PC-9 (cell line): ENCODE measurements at regions of chr6 and their contacts with region 1.

Region 1: DNA sequence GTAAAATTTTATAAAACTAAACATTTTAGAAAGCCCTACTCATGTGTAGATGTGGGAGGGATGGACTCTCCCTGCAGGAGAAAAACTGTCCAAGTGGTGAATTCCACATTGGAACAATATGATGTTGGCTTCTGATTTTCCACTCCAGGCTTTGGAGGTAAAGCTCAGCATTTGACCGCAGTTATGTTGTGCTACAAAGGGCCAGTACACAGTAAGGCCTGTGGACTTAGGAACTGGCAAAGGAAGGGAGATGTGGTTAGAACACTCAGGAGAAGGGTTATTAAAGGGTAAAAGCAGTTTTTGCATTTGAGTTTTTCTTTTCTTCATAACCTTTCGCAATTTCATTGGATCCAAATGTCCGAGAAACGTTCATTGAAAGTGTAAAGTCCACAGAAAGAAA is 150.3 kb upstream of the SASH1 start:
- DNase-seq: peak in 1 of 2 experiments; percentile 68
- H3K4me3 ChIP-seq: peak overlapping the region; percentile 47; the same call in 1 of the 2 replicates
- H3K27ac ChIP-seq: peak overlapping the region; percentile 99
- H3K4me1 ChIP-seq: peaks cover 53% of the 10 kb centered on the region
- H3K27me3 ChIP-seq: no peaks in the 10 kb centered on the region
- CTCF ChIP-seq: no peak

Region 2: GRCh38 chr6:148244217-148244935 is 52.1 kb after region 1 on chr6:
- CTCF ChIA-PET with region 1: interaction called, 10 read pairs
- POLR2A ChIA-PET with region 1: interaction called, 3 read pairs
- intact Hi-C with region 1: no loop called
- DNase-seq: no peak
- H3K4me3 ChIP-seq: no peak overlapping the region
- H3K27ac ChIP-seq: no peak overlapping the region
- H3K4me1 ChIP-seq: no peaks in the 10 kb centered on the region
- H3K27me3 ChIP-seq: no peaks in the 10 kb centered on the region
- CTCF ChIP-seq: no peak

Region 3: DNA sequence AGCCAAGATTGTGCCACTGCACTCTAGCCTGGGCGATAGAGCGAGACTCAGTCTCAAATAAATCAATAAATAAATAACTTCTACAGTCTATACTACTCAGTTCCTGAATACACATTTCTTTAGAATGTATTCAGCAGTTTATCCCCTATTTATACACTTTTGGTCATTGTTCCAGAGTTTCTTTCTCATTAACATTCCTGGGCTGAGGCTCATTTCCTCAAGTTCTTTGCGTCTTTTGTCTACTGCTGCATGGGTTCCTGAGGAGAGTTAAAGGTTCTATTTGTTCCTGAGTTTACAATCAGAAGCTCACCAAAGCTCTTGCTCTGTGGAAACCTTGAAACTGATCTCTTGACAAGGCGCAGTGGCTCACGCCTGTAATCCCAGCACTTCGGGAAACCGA is 112.7 kb after region 1 on chr6:
- CTCF ChIA-PET with region 1: no interaction called
- POLR2A ChIA-PET with region 1: no interaction called
- intact Hi-C with region 1: loop called (anchors 2 kb)
- DNase-seq: no peak
- H3K4me3 ChIP-seq: no peak overlapping the region
- H3K27ac ChIP-seq: no peak overlapping the region
- H3K4me1 ChIP-seq: peaks cover 34% of the 10 kb centered on the region
- H3K27me3 ChIP-seq: no peaks in the 10 kb centered on the region
- CTCF ChIP-seq: no peak

Region 4: GRCh38 chr6:148407372-148407771 is 215.1 kb after region 1 on chr6:
- CTCF ChIA-PET with region 1: no interaction called
- POLR2A ChIA-PET with region 1: no interaction called
- intact Hi-C with region 1: loop called (anchors 1 kb)
- DNase-seq: peak; percentile 9 to 86
- H3K4me3 ChIP-seq: no peak overlapping the region
- H3K27ac ChIP-seq: peak overlapping the region; percentile 47
- H3K4me1 ChIP-seq: peaks cover 45% of the 10 kb centered on the region
- H3K27me3 ChIP-seq: no peaks in the 10 kb centered on the region
- CTCF ChIP-seq: no peak

Region 5: GRCh38 chr6:148440877-148441453 is 248.7 kb after region 1 on chr6:
- CTCF ChIA-PET with region 1: no interaction called
- POLR2A ChIA-PET with region 1: no interaction called
- intact Hi-C with region 1: loop called (anchors 1 kb)
- DNase-seq: peak; percentile 59 to 91
- H3K4me3 ChIP-seq: no peak overlapping the region
- H3K27ac ChIP-seq: peak overlapping the region; percentile 85
- H3K4me1 ChIP-seq: peaks cover 58% of the 10 kb centered on the region
- H3K27me3 ChIP-seq: no peaks in the 10 kb centered on the region
- CTCF ChIP-seq: no peak